ENCODE measurements at regions of chr1 and their contacts with region 1.

Region 1: DNA sequence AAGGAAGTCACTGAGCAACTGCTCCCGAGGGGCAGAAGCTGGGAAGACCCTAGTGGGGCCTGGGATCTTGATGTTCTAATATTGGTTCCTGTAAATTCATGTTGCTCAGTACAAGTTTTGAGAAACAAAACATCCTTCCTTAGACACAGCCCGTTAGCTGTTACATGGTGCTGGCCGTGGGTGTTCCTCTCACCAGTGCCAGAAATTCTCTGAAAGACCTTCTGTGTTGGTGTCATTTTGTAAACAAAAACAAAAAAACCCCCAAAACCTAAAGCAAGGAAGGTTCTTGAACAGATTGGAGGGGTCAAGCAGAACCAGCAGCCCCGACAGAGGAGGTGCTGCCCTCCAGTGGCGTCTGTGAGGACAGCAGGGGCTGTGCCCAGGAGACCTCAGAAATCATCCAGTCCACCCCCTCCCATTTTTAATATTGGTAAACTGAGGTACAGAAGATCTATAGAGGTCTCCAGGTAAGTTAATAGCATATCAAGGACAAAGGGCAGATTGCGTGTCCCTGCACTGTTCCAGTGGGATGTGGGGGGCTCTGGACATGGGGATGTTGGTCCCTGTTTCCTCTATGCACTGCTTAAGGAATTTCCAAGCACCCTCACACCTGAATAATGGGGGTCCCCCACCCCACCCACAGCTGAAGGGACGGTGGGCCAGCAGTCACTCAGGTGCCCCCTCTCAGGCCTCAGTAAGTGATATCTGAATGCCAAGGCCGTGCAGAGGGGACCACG is 38.2 kb downstream of the SLC2A7 start:
- DNase-seq: peak; percentile 54
- H3K4me3 ChIP-seq: no peak overlapping the region
- H3K27ac ChIP-seq: no peak overlapping the region
- H3K4me1 ChIP-seq: no peaks in the 10 kb centered on the region
- H3K27me3 ChIP-seq: no peaks in the 10 kb centered on the region
- CTCF ChIP-seq: peak; percentile 97

Region 2: DNA sequence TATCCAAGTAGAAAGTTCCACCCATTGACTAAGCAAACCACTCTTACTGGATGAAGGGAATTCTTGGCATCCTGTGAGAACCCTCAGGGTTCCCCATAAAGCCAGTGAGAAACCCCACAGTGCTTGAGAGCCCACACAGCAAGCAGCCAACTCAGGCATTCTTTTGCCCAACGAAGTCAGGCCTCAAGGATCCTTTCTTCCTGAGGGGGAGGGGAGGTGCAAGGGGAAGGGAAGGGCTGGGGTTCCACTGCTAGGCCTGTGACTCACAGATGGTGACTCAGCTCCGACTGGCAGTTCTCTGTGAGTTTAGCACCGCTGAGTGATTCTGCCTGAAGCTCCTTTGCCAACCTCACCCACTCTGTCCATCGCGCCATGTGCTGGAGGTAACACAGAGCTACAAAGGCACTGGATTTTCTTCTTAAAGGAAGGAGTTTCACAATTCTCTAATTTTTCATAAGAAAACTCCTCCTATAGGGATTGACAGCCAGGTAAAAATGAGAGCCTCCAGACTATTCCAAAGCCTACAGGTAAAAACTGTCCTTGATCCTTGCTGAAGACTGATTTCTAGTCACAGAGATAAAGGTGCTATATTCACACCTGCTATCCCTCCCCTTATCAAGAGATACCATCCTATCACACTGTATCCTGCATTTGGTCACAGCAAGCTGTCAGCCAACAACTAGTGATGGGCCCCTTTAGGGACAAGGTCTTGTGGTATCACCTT is 114.4 kb before region 1 on chr1:
- intact Hi-C with region 1: loop called (anchors 5 kb)
- DNase-seq: peak; percentile 86
- H3K4me3 ChIP-seq: no peak overlapping the region
- H3K27ac ChIP-seq: peak overlapping the region; percentile 58
- H3K4me1 ChIP-seq: peaks cover 33% of the 10 kb centered on the region
- H3K27me3 ChIP-seq: no peaks in the 10 kb centered on the region
- CTCF ChIP-seq: no peak

Region 3: GRCh38 chr1:9069326-9070100 is 81.5 kb after region 1 on chr1 and contains the start of gene SLC2A5:
- intact Hi-C with region 1: no loop called
- DNase-seq: peak; percentile 34
- H3K4me3 ChIP-seq: peak within 1 kb of the TSS; percentile 4
- H3K27ac ChIP-seq: peak within 1 kb of the TSS; percentile 47
- H3K4me1 ChIP-seq: peaks cover 10% of the 10 kb centered on the region
- H3K27me3 ChIP-seq: no peaks in the 10 kb centered on the region
- CTCF ChIP-seq: no peak
- total RNA-seq, gene SLC2A5: 1.8 to 4.9 TPM

Region 4: DNA sequence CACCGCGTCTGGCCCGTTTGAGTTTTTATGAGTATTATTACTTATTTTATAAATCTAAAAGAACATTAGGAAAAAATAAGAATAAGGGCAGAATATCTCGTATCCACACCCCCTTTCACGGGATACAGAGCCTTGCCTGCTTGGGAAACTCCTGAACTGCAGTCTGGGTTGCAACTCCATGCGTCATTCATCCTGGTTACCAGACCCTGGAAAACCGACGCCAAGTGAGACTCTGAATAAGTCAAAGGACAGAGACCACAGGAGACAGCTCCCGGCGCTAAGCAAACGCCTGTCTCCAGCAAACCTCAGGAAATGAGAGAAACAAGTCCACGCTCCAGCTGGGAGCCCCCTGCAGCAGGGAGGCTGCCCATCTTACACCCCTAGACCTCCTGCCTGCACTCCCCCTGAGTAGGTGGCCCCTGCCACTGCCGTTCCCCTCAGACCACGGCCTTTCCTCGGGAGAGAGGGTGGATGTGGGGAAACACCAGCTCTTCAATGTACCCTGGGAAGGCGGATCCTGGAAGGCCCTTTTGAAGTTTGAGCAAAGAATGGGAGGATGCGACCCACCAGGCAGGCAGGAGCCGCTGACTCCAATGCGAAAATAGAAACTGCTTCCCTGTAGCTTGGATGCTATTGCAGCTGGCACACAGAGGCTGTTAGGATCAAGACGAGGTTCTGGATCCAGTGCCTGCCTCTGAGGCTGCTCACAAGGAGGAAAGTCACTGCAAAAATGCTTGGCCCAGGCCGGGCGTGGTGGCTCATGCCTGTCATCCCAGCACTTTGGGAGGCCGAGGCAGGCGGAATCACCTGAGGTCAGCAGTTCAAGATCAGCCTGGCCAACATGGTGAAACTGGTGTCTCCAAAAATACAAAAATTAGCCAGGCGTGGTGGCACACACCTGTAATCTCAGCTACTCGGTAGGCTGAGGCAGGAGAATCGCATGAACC is 178.5 kb after region 1 on chr1:
- intact Hi-C with region 1: no loop called
- DNase-seq: no peak
- H3K4me3 ChIP-seq: no peak overlapping the region
- H3K27ac ChIP-seq: no peak overlapping the region
- H3K4me1 ChIP-seq: peaks cover 4% of the 10 kb centered on the region
- H3K27me3 ChIP-seq: no peaks in the 10 kb centered on the region
- CTCF ChIP-seq: no peak

Measured in colonic mucosa (tissue), 4 donors.